GM12878 (cell line): ENCODE measurements at regions of chr10 and their contacts with region 1.

Region 1: GRCh38 chr10:58952747-58953466 is 223.5 kb upstream of the PHYHIPL start:
- DNase-seq: peak; percentile 19
- ATAC-seq: peak; percentile 90
- H3K4me3 ChIP-seq: no peak overlapping the region
- H3K27ac ChIP-seq: no peak overlapping the region
- H3K4me1 ChIP-seq: no peaks in the 10 kb centered on the region
- H3K27me3 ChIP-seq: no peaks in the 10 kb centered on the region
- CTCF ChIP-seq: peak; percentile 76 to 91 (median 80); a peak in 5 of 6 replicates
- EP300 ChIP-seq: no peak
- POLR2A ChIP-seq: no peak
- RAD21 ChIP-seq: peak; percentile 98

Region 2: GRCh38 chr10:58980826-58981415 is 28.0 kb after region 1 on chr10:
- CTCF ChIA-PET with region 1: interaction called, 7 read pairs
- POLR2A ChIA-PET with region 1: interaction called, 4 read pairs
- RAD21 ChIA-PET with region 1: interaction called, 14 read pairs
- SMC1A ChIA-PET with region 1: interaction called, 8 read pairs
- in situ Hi-C with region 1: no loop called
- intact Hi-C with region 1: no loop called
- DNase-seq: no peak
- ATAC-seq: peak; percentile 45; the same call in 2 of the 3 replicates
- H3K4me3 ChIP-seq: no peak overlapping the region
- H3K27ac ChIP-seq: no peak overlapping the region
- H3K4me1 ChIP-seq: no peaks in the 10 kb centered on the region
- H3K27me3 ChIP-seq: no peaks in the 10 kb centered on the region
- CTCF ChIP-seq: no peak
- EP300 ChIP-seq: no peak
- POLR2A ChIP-seq: no peak
- RAD21 ChIP-seq: no peak

Region 3: DNA sequence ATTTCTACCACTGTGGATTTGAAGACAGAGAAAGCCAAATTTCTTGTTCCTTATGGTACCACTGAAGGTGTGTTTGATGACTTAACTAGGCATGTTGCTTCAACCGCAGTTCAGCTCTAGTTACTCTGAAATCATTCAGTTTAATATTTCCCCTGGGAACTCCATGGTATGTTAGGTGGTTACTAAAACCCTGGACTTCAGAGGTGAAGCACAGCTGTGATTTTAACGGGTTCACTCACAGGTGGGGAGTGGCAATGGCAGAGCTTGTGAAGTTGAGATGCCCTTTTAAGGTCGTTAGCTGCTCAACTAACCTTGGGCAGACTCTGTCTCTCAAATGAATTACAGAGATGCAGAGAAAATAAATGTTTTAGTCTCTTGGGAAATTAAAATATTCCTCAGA is 59.9 kb after region 1 on chr10:
- CTCF ChIA-PET with region 1: interaction called, 6 read pairs
- POLR2A ChIA-PET with region 1: no interaction called
- RAD21 ChIA-PET with region 1: interaction called, 6 read pairs
- SMC1A ChIA-PET with region 1: interaction called, 13 read pairs
- in situ Hi-C with region 1: no loop called
- intact Hi-C with region 1: no loop called
- DNase-seq: no peak
- ATAC-seq: peak; percentile 79
- H3K4me3 ChIP-seq: no peak overlapping the region
- H3K27ac ChIP-seq: no peak overlapping the region
- H3K4me1 ChIP-seq: no peaks in the 10 kb centered on the region; the same call in 1 of the 2 replicates
- H3K27me3 ChIP-seq: no peaks in the 10 kb centered on the region
- CTCF ChIP-seq: no peak
- EP300 ChIP-seq: 0 out of 4 replicates have a peak, but pooled peaks of 1 of the 2 experiments have one; percentile 10
- POLR2A ChIP-seq: no peak
- RAD21 ChIP-seq: no peak

Region 4: GRCh38 chr10:59107147-59107546 is 154.2 kb after region 1 on chr10:
- CTCF ChIA-PET with region 1: interaction called, 3 read pairs
- POLR2A ChIA-PET with region 1: no interaction called
- RAD21 ChIA-PET with region 1: interaction called, 4 read pairs
- SMC1A ChIA-PET with region 1: interaction called, 5 read pairs
- in situ Hi-C with region 1: no loop called
- intact Hi-C with region 1: loop called (anchors 2 kb)
- DNase-seq: peak; percentile 26
- ATAC-seq: peak; percentile 78
- H3K4me3 ChIP-seq: no peak overlapping the region
- H3K27ac ChIP-seq: no peak overlapping the region
- H3K4me1 ChIP-seq: no peaks in the 10 kb centered on the region
- H3K27me3 ChIP-seq: no peaks in the 10 kb centered on the region
- CTCF ChIP-seq: no peak
- EP300 ChIP-seq: no peak
- POLR2A ChIP-seq: no peak
- RAD21 ChIP-seq: no peak

Region 5: GRCh38 chr10:59234816-59235429 is 282.0 kb after region 1 on chr10:
- CTCF ChIA-PET with region 1: interaction called, 17 read pairs
- POLR2A ChIA-PET with region 1: no interaction called
- RAD21 ChIA-PET with region 1: interaction called, 11 read pairs
- SMC1A ChIA-PET with region 1: interaction called, 17 read pairs
- in situ Hi-C with region 1: loop called (anchors 5 kb)
- intact Hi-C with region 1: loop called (anchors 1 kb)
- DNase-seq: no peak
- ATAC-seq: peak; percentile 58
- H3K4me3 ChIP-seq: no peak overlapping the region
- H3K27ac ChIP-seq: no peak overlapping the region
- H3K4me1 ChIP-seq: no peaks in the 10 kb centered on the region
- H3K27me3 ChIP-seq: no peaks in the 10 kb centered on the region
- CTCF ChIP-seq: peak; percentile 44 to 57 (median 45); a peak in 5 of 6 replicates
- EP300 ChIP-seq: no peak
- POLR2A ChIP-seq: no peak
- RAD21 ChIP-seq: peak; percentile 42

Region 6: DNA sequence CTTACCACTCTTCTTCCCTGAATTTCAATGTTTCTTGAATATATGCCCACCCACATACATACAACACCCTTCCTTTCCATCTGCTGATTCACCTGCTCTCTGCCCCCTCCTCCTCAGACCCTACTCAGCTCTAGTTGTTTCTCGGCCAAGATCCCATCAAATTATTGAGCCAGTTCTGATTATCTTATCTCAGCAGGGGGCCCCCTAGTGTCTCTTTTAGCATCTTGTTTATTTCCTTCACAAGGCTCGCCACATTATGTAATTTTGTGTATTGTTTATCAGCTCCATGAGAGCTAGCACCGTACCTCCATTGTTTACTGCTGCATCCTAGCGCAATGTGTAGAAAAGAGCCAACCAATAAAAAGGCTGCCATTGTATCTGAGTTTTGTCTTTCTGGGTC is 337.5 kb after region 1 on chr10:
- CTCF ChIA-PET with region 1: interaction called, 35 read pairs
- POLR2A ChIA-PET with region 1: no interaction called
- RAD21 ChIA-PET with region 1: interaction called, 11 read pairs
- SMC1A ChIA-PET with region 1: interaction called, 7 read pairs
- in situ Hi-C with region 1: no loop called
- intact Hi-C with region 1: loop called (anchors 1 kb)
- DNase-seq: no peak
- ATAC-seq: peak; percentile 57
- H3K4me3 ChIP-seq: no peak overlapping the region
- H3K27ac ChIP-seq: no peak overlapping the region
- H3K4me1 ChIP-seq: no peaks in the 10 kb centered on the region
- H3K27me3 ChIP-seq: 0 out of 4 replicates have a peak, but pooled peaks cover 0 to 1% of the 10 kb centered on the region in 2 experiments
- CTCF ChIP-seq: peak; percentile 16 to 38 (median 27); a peak in 4 of 6 replicates
- EP300 ChIP-seq: no peak
- POLR2A ChIP-seq: no peak
- RAD21 ChIP-seq: peak; percentile 51

Region 7: DNA sequence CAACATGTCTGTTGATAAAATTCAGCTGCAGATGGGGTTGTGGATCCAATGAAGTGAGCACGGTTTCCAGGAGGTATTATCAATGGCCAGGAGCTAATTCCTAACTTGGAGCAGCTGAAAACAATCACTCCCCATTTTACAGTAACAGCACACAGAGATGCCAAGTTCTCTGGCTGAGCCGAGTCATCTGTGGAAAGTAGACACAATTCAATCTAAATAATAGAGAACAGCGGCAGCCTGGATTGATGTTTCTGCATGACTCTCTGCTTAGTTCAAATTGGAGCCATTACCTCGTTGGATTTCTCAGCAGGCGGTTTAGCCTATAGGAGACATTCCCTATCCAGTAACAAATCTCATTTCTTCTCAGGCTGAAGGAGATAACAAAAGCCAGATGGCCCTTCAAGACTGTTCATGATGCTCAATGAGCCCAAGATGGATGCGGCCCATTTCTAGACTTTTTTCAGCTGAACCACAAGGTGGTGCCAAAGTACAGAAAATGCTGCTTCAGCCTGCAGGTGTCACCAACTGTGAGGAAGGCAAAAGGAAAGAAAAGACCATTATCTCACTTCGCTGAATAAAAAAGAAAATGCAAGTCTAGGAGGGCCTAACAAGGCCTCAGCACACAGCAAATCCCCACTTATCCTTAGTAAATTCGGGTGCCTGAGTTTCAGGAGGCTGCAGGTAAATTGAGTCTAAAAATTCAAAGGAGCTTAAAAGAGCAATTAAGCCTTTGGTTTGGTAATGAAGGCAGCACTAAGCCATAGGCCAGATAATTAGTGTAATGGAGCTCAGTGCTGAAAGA is 673.0 kb after region 1 on chr10:
- CTCF ChIA-PET with region 1: interaction called, 81 read pairs
- POLR2A ChIA-PET with region 1: no interaction called
- RAD21 ChIA-PET with region 1: interaction called, 16 read pairs
- SMC1A ChIA-PET with region 1: interaction called, 31 read pairs
- in situ Hi-C with region 1: loop called (anchors 10 kb)
- intact Hi-C with region 1: loop called (anchors 1 kb)
- DNase-seq: peak; percentile 35
- ATAC-seq: peak; percentile 96
- H3K4me3 ChIP-seq: no peak overlapping the region
- H3K27ac ChIP-seq: no peak overlapping the region
- H3K4me1 ChIP-seq: no peaks in the 10 kb centered on the region; the same call in 1 of the 2 replicates
- H3K27me3 ChIP-seq: no peaks in the 10 kb centered on the region
- CTCF ChIP-seq: peak; percentile 66 to 93 (median 80); a peak in 5 of 6 replicates
- EP300 ChIP-seq: no peak
- POLR2A ChIP-seq: no peak
- RAD21 ChIP-seq: peak; percentile 100